ENCODE measurements at regions of chr16 and their contacts with region 1.

Region 1: GRCh38 chr16:10136916-10137315 is 45.3 kb downstream of the GRIN2A start:
- DNase-seq: peak; percentile 36
- ATAC-seq: peak; percentile 83
- H3K4me3 Mint-ChIP-seq: no peak overlapping the region
- H3K27ac Mint-ChIP-seq: no peak overlapping the region
- H3K4me1 Mint-ChIP-seq: no peaks in the 10 kb centered on the region
- H3K27me3 Mint-ChIP-seq: no peaks in the 10 kb centered on the region
- CTCF ChIP-seq: no peak

Region 2: GRCh38 chr16:10122546-10122945 is 14.4 kb before region 1 on chr16:
- CTCF ChIA-PET with region 1: interaction called, 11 read pairs
- POLR2A ChIA-PET with region 1: no interaction called
- DNase-seq: peak; percentile 20
- ATAC-seq: no peak
- H3K4me3 Mint-ChIP-seq: no peak overlapping the region
- H3K27ac Mint-ChIP-seq: no peak overlapping the region
- H3K4me1 Mint-ChIP-seq: peaks cover 28% of the 10 kb centered on the region
- H3K27me3 Mint-ChIP-seq: no peaks in the 10 kb centered on the region
- CTCF ChIP-seq: no peak

Region 3: GRCh38 chr16:10297341-10298006 is 160.6 kb after region 1 on chr16:
- CTCF ChIA-PET with region 1: no interaction called
- POLR2A ChIA-PET with region 1: no interaction called
- DNase-seq: no peak
- ATAC-seq: no peak
- H3K4me3 Mint-ChIP-seq: no peak overlapping the region
- H3K27ac Mint-ChIP-seq: no peak overlapping the region
- H3K4me1 Mint-ChIP-seq: peaks cover 19% of the 10 kb centered on the region
- H3K27me3 Mint-ChIP-seq: no peaks in the 10 kb centered on the region; the same call in 1 of the 2 replicates
- CTCF ChIP-seq: no peak